ENCODE measurements at regions of chr7 and their contacts with region 1.

Region 1: DNA sequence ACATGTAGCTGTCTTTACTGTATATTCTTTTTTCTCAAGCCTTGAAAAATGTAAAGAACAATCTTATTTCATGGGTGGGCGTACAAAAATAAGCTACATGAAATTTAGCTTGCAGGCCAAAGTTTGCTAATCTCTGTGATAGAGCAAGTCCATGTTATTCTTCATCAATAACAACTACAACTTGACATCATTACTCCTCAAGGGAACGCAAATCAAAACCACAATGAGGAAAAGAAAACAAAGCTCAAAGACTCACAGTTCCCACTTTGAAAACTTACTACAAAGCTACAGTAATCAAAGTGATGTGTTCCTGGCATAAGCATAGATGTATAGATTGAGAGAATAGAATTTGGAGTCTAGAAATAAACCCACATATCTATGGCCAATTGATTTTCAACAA is 62.5 kb downstream of the GNA12 start:
- DNase-seq: no peak
- ATAC-seq: no peak
- H3K4me3 Mint-ChIP-seq: no peak overlapping the region
- H3K27ac Mint-ChIP-seq: no peak overlapping the region
- H3K4me1 Mint-ChIP-seq: peaks cover 23% of the 10 kb centered on the region
- H3K27me3 Mint-ChIP-seq: no peaks in the 10 kb centered on the region

Region 2: DNA sequence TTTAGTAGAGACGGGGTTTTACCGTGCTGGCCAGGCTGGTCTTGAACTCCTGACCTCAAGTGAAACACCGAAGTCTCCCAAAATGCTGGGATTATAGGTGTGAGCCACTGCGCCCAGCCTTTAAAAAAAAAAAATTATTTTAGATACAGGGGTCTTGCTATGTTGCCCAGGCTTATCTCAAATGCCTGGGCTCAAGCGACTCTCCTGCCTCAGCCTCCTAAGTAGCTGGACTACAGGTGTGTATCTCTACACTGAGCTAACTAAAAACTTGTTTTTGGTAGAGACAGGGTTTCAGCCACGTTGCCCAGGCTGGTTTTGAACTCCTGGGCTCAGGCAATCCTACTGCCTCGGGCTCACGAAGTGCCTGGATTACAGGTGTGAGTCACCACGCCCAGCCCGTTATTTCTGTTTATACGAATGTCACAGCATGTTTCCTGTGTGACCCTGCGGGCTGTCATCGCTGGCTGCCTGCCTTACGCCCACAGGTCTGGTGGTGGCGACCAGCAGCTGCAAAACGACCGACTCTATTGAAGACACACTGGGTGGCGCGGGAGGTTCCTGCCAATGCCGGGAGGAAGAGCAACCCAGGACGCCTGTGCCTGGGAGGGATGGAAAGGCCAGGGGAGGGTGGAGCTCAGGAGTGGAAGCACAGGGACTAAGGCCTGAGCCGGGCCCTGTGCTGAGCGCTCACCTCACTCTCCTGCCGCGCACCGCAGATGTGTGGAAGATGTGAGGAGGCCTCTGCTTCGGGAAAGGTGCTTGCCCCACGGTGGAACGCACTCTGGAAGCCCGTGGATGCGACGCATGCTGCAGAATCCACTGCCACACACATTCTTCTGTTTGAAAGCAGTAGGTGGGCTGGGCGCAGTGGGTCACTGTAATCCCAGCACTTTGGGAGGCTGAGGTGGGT is 60.8 kb before region 1 on chr7:
- CTCF ChIA-PET with region 1: interaction called, 3 read pairs
- POLR2A ChIA-PET with region 1: interaction called, 7 read pairs
- intact Hi-C with region 1: loop called in 1 of 2 experiments (anchors 1 kb)
- DNase-seq: peak; percentile 95
- ATAC-seq: peak; percentile 86
- H3K4me3 Mint-ChIP-seq: no peak overlapping the region
- H3K27ac Mint-ChIP-seq: peak overlapping the region; percentile 32
- H3K4me1 Mint-ChIP-seq: peaks cover 49% of the 10 kb centered on the region
- H3K27me3 Mint-ChIP-seq: no peaks in the 10 kb centered on the region

Region 3: GRCh38 chr7:2771274-2771731 is 10.3 kb before region 1 on chr7:
- CTCF ChIA-PET with region 1: interaction called, 4 read pairs
- POLR2A ChIA-PET with region 1: interaction called, 5 read pairs
- intact Hi-C with region 1: loop called in 1 of 2 experiments (anchors 1 kb)
- DNase-seq: no peak
- ATAC-seq: no peak
- H3K4me3 Mint-ChIP-seq: no peak overlapping the region
- H3K27ac Mint-ChIP-seq: peak overlapping the region; percentile 90
- H3K4me1 Mint-ChIP-seq: peaks cover 40% of the 10 kb centered on the region
- H3K27me3 Mint-ChIP-seq: no peaks in the 10 kb centered on the region

Region 4: GRCh38 chr7:2934211-2934731 is 152.6 kb after region 1 on chr7:
- CTCF ChIA-PET with region 1: no interaction called
- POLR2A ChIA-PET with region 1: no interaction called
- intact Hi-C with region 1: no loop called
- DNase-seq: peak; percentile 82
- ATAC-seq: peak; percentile 98
- H3K4me3 Mint-ChIP-seq: peak overlapping the region; percentile 43
- H3K27ac Mint-ChIP-seq: peak overlapping the region; percentile 100
- H3K4me1 Mint-ChIP-seq: peaks cover 20% of the 10 kb centered on the region
- H3K27me3 Mint-ChIP-seq: no peaks in the 10 kb centered on the region